Activated CD4-positive, alpha-beta T cell treated with anti-CD3 and anti-CD28 coated beads for 36 hours (primary cell): ENCODE measurements at regions of chr2 and their contacts with region 1.

Region 1: GRCh38 chr2:230602562-230603230 is 109.9 kb upstream of the CAB39 start:
- DNase-seq: peak; percentile 71
- ATAC-seq: peak; percentile 83
- H3K4me3 Mint-ChIP-seq: peak overlapping the region; percentile 6
- H3K27ac Mint-ChIP-seq: peak overlapping the region; percentile 89
- H3K4me1 Mint-ChIP-seq: peaks cover 48% of the 10 kb centered on the region
- H3K27me3 Mint-ChIP-seq: no peaks in the 10 kb centered on the region

Region 2: DNA sequence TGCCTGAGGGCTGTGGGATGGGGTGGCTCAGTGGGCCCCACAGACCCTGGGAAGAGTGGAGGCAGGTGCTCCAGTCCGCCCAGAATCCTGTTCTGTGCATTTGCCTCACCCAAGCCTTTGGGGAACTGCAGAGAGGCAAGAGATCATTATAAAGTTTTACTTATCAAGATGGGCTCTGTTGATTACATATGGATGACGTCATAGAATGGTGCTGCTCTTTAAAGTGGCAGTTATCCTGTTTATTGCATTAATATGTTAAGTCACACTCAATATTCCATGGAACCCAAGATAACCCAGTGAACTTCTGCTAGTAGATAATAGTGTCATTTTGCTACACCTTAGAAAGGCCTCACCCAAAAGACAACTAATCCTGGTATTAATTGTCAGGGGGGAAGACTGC is 231.7 kb before region 1 on chr2:
- CTCF ChIA-PET with region 1: no interaction called
- POLR2A ChIA-PET with region 1: no interaction called
- intact Hi-C with region 1: no loop called
- DNase-seq: no peak
- ATAC-seq: no peak
- H3K4me3 Mint-ChIP-seq: no peak overlapping the region
- H3K27ac Mint-ChIP-seq: no peak overlapping the region
- H3K4me1 Mint-ChIP-seq: peaks cover 3% of the 10 kb centered on the region
- H3K27me3 Mint-ChIP-seq: no peaks in the 10 kb centered on the region

Region 3: DNA sequence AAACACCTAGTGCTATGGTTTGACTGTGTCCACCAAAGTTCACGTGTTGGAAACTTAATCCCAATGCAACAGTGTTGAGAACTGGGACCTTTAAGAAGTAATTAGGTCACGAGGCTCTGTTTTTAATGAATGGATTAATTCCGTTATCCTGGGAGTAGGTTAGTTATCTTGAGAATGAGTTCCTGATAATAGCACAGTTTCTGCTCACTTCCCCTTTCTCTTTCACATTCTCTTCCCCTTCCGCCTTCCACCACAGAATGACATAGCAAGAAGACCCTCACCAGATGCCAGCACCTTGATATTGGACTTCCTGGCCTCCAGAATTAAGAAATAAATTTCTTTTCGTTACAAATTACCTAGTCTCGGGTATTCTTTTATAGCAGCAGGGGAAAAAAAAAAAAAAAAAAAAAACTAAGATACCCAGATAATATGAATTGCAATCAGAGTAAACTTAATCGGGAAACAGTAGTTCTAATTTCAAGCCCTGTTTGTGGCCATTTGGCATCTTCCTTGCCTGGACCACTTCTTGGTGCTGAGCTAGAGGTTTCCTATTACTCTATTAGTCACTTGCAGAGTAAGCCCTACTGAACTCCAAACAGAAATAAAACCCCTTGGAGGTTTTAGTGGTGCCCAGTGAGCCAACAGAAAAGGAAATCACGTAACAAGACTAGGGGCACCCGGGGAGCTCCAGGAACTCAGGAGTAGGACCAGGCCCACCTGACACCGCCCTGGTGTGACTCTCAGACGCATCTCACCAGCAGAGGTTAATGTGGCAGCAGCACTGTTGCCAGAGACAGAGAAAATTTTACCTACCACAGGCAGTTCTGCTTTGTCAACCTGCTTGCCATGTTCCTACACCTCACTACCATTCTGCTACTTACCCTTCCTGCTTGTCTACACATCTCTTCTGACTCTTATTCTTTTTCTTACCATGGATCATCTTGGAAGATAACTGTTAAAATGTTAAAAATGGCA is 37.6 kb before region 1 on chr2:
- CTCF ChIA-PET with region 1: interaction called, 3 read pairs
- POLR2A ChIA-PET with region 1: no interaction called
- intact Hi-C with region 1: loop called in 1 of 2 experiments (anchors 5 kb)
- DNase-seq: no peak
- ATAC-seq: no peak
- H3K4me3 Mint-ChIP-seq: no peak overlapping the region
- H3K27ac Mint-ChIP-seq: no peak overlapping the region
- H3K4me1 Mint-ChIP-seq: peaks cover 3% of the 10 kb centered on the region
- H3K27me3 Mint-ChIP-seq: no peaks in the 10 kb centered on the region

Region 4: DNA sequence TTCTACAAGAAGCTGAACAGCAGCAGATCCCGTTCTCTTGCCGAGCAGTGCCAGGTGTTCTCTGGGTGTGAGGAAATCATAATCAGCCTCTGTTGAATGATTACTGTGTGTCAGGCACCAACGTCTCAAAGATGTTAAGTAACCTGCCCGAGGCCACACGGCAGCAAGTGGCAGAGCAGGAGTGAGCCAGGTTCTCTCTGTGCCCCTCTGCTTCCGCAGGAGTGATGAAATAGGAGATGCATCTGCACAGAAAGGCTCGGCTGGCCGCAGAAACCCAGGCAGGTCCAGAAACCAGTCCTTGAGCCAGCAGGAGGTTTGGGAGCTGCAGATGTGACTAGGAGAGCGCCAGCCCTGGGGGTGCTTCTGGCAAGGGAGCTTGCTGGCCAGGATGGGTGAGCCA is 1252.0 kb after region 1 on chr2:
- CTCF ChIA-PET with region 1: no interaction called
- POLR2A ChIA-PET with region 1: no interaction called
- intact Hi-C with region 1: no loop called
- DNase-seq: no peak
- ATAC-seq: no peak
- H3K4me3 Mint-ChIP-seq: no peak overlapping the region
- H3K27ac Mint-ChIP-seq: no peak overlapping the region
- H3K4me1 Mint-ChIP-seq: no peaks in the 10 kb centered on the region
- H3K27me3 Mint-ChIP-seq: peaks cover 6% of the 10 kb centered on the region